ENCODE measurements at regions of chr10 and their contacts with region 1.

Region 1: DNA sequence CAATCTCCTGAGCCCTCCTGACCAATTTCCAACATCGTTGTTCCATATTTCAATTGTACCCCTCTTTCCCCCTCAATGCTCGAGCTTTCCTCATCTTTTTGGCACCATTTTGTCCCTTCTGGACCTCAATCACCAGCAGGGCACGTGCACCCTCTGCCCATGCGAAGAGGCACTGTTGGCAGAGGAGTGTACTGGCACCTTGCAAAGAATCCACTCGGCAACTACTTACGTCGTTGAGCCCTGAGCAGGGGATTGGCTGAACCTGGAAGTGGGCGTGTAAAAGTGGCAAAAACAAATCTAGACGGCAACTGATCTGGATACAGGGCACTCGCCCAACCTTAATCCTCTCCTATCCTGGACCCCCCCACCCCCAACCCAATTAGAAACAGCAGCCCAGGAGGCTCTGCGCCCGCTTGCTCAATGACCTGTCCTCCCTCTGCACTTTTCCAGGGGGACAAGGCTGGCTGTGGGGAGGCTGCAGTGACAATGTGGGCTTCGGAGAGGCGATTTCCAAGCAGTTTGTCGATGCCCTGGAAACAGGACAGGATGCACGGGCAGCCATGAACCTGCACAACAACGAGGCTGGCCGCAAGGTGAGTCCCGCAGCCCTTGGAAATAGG is 18.8 kb downstream of the WNT8B start:
- DNase-seq: peak; percentile 92
- ATAC-seq: peak; percentile 96
- H3K4me3 Mint-ChIP-seq: peak overlapping the region; percentile 71
- H3K27ac Mint-ChIP-seq: no peak overlapping the region
- H3K4me1 Mint-ChIP-seq: peaks cover 5% of the 10 kb centered on the region
- H3K27me3 Mint-ChIP-seq: peaks cover 13% of the 10 kb centered on the region

Region 2: DNA sequence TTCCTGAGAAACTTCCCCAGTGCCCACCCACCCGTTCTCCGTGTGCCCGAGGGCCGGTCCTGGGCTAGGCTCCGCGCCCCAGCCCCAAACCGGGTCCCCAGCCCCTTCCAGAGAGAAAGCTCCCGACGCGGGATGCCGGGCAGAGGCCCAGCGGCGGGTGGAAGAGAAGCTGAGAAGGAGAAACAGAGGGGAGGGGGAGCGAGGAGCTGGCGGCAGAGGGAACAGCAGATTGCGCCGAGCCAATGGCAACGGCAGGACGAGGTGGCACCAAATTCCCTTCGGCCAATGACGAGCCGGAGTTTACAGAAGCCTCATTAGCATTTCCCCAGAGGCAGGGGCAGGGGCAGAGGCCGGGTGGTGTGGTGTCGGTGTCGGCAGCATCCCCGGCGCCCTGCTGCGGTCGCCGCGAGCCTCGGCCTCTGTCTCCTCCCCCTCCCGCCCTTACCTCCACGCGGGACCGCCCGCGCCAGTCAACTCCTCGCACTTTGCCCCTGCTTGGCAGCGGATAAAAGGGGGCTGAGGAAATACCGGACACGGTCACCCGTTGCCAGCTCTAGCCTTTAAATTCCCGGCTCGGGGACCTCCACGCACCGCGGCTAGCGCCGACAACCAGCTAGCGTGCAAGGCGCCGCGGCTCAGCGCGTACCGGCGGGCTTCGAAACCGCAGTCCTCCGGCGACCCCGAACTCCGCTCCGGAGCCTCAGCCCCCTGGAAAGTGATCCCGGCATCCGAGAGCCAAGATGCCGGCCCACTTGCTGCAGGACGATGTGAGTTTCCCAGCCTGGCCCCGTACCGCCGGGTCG is 134.6 kb before region 1 on chr10 and contains the start of gene SCD:
- CTCF ChIA-PET with region 1: interaction called, 22 read pairs
- POLR2A ChIA-PET with region 1: interaction called, 5 read pairs
- intact Hi-C with region 1: no loop called
- DNase-seq: peak; percentile 94
- ATAC-seq: peak; percentile 92
- H3K4me3 Mint-ChIP-seq: peak within 1 kb of the TSS; percentile 88
- H3K27ac Mint-ChIP-seq: peak within 1 kb of the TSS; percentile 91
- H3K4me1 Mint-ChIP-seq: peaks cover 44% of the 10 kb centered on the region
- H3K27me3 Mint-ChIP-seq: no peaks in the 10 kb centered on the region
- total RNA-seq, gene SCD: 203 to 206 TPM

Region 3: DNA sequence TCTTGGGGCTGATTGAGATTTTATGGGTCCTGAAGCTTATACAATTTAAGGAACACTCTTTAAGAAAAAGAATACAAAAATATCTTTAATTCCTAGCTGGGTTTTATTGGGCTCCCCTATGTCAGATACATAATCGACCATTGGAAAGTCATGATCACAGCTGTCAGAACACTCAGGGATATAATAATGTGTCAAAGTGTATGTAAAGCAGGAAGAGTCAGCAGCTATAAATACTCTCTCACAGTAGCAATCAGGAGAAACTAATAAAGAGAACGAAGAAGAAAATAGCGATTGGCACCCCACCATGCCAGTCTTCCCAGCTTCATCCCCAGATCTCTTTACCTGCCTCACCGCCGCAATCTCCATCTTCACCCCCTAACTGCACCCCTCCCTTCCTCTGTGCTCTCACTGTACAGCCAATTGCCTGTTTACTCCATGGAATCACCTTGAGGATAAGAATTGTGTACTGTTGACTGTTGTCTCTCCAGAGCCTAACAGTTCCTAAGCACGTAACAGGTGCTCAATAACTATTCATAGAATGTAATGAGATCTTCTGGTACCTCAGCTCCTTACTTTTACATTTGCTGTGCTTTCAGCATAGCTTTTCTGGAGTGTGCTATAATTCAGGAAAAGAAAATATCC is 42.8 kb before region 1 on chr10:
- CTCF ChIA-PET with region 1: interaction called, 21 read pairs
- POLR2A ChIA-PET with region 1: no interaction called
- intact Hi-C with region 1: loop called in 1 of 2 experiments (anchors 1 kb)
- DNase-seq: no peak
- ATAC-seq: no peak
- H3K4me3 Mint-ChIP-seq: no peak overlapping the region
- H3K27ac Mint-ChIP-seq: no peak overlapping the region
- H3K4me1 Mint-ChIP-seq: peaks cover 3% of the 10 kb centered on the region
- H3K27me3 Mint-ChIP-seq: peaks cover 1% of the 10 kb centered on the region

Region 4: GRCh38 chr10:100496567-100496966 is 15.0 kb after region 1 on chr10:
- CTCF ChIA-PET with region 1: interaction called, 67 read pairs
- POLR2A ChIA-PET with region 1: no interaction called
- intact Hi-C with region 1: no loop called
- DNase-seq: peak; percentile 20
- ATAC-seq: peak; percentile 53
- H3K4me3 Mint-ChIP-seq: no peak overlapping the region
- H3K27ac Mint-ChIP-seq: peak overlapping the region; percentile 62
- H3K4me1 Mint-ChIP-seq: peaks cover 5% of the 10 kb centered on the region
- H3K27me3 Mint-ChIP-seq: no peaks in the 10 kb centered on the region

Region 5: GRCh38 chr10:100518761-100519241 is 37.2 kb after region 1 on chr10:
- CTCF ChIA-PET with region 1: interaction called, 96 read pairs
- POLR2A ChIA-PET with region 1: no interaction called
- intact Hi-C with region 1: loop called (anchors 1 kb)
- DNase-seq: peak; percentile 82
- ATAC-seq: peak; percentile 76
- H3K4me3 Mint-ChIP-seq: no peak overlapping the region
- H3K27ac Mint-ChIP-seq: peak overlapping the region; percentile 47
- H3K4me1 Mint-ChIP-seq: peaks cover 13% of the 10 kb centered on the region
- H3K27me3 Mint-ChIP-seq: no peaks in the 10 kb centered on the region

Region 6: DNA sequence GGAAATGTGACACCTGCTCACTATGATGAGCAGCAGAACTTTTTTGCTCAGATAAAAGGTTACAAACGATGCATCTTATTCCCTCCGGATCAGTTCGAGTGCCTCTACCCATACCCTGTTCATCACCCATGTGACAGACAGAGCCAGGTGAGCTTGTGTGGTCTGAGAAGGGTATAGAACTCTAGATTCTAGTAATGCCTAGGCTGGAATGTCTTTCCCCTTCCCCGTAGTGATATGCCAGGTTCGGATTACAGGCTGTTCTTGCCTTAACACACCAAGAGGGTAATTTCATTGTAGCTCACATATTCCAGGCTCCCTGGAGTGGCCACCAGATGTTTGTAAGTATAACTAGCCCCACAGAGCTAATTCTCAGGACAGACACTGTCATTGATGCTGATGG is 63.4 kb after region 1 on chr10:
- CTCF ChIA-PET with region 1: no interaction called
- POLR2A ChIA-PET with region 1: no interaction called
- intact Hi-C with region 1: no loop called
- DNase-seq: no peak
- ATAC-seq: no peak
- H3K4me3 Mint-ChIP-seq: no peak overlapping the region
- H3K27ac Mint-ChIP-seq: no peak overlapping the region
- H3K4me1 Mint-ChIP-seq: peaks cover 2% of the 10 kb centered on the region
- H3K27me3 Mint-ChIP-seq: no peaks in the 10 kb centered on the region

Measured in activated CD4-positive, alpha-beta T cell treated with anti-CD3 and anti-CD28 coated beads for 36 hours (primary cell).